ENCODE measurements at regions of chr11 and their contacts with region 1.

Region 1: GRCh38 chr11:32323814-32324130 is 111.6 kb downstream of the WT1 start:
- DNase-seq: no peak
- ATAC-seq: no peak
- H3K4me3 ChIP-seq: no peak overlapping the region
- H3K27ac ChIP-seq: no peak overlapping the region
- H3K4me1 ChIP-seq: no peaks in the 10 kb centered on the region
- H3K27me3 ChIP-seq: 0 out of 4 replicates have a peak, but pooled peaks cover 0 to 2% of the 10 kb centered on the region in 2 experiments
- CTCF ChIP-seq: no peak
- EP300 ChIP-seq: no peak
- POLR2A ChIP-seq: no peak
- RAD21 ChIP-seq: no peak

Region 2: DNA sequence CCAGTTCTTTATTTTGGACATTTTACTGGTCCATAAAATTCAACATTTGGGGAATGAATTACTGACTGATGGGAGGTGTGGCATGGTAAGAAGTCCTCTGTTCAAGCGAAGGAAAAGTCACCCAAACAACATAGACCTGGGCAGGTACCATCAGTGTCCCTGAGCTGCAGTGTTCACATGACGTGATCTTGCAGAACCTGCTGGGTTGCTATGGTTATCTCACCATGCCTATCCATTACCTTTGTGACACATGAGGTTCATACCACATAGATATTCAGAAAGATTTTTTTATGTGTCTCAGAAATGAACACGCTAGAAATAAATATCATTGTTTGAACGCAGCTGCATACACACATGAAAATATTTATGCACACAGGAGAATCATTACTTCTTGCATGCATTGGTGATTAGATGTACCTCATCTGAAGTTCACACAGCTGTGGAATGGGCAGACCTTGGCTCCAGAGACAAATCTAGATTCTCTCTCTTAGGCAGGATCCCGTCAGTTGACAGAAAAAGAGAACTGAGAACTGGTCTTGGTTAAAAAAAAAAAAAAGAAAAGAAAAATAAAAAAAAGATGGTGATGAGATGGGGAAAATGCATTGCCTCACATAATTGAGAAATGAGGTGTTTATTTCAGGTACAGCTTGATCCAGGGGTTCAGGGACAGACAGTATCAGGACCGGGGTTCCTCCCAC is 254.3 kb before region 1 on chr11:
- CTCF ChIA-PET with region 1: no interaction called
- POLR2A ChIA-PET with region 1: no interaction called
- RAD21 ChIA-PET with region 1: no interaction called
- SMC1A ChIA-PET with region 1: no interaction called
- in situ Hi-C with region 1: no loop called
- intact Hi-C with region 1: no loop called
- DNase-seq: no peak
- ATAC-seq: peak; percentile 87
- H3K4me3 ChIP-seq: no peak overlapping the region
- H3K27ac ChIP-seq: no peak overlapping the region
- H3K4me1 ChIP-seq: peaks cover 5% of the 10 kb centered on the region
- H3K27me3 ChIP-seq: no peaks in the 10 kb centered on the region
- CTCF ChIP-seq: no peak
- EP300 ChIP-seq: no peak
- POLR2A ChIP-seq: no peak
- RAD21 ChIP-seq: no peak

Region 3: GRCh38 chr11:32312865-32313403 is 10.8 kb before region 1 on chr11:
- CTCF ChIA-PET with region 1: interaction called, 10 read pairs
- POLR2A ChIA-PET with region 1: no interaction called
- RAD21 ChIA-PET with region 1: interaction called, 3 read pairs
- SMC1A ChIA-PET with region 1: interaction called, 10 read pairs
- in situ Hi-C with region 1: no loop called
- intact Hi-C with region 1: no loop called
- DNase-seq: no peak
- ATAC-seq: peak; percentile 78
- H3K4me3 ChIP-seq: no peak overlapping the region
- H3K27ac ChIP-seq: no peak overlapping the region
- H3K4me1 ChIP-seq: no peaks in the 10 kb centered on the region
- H3K27me3 ChIP-seq: peaks cover 0 to 2% of the 10 kb centered on the region in 2 experiments; a peak in 1 of 4 replicates
- CTCF ChIP-seq: peak; percentile 49 to 50 (median 49); a peak in 5 of 6 replicates
- EP300 ChIP-seq: no peak
- POLR2A ChIP-seq: no peak
- RAD21 ChIP-seq: 0 out of 2 replicates have a peak, but pooled peaks have one; percentile 19

Region 4: DNA sequence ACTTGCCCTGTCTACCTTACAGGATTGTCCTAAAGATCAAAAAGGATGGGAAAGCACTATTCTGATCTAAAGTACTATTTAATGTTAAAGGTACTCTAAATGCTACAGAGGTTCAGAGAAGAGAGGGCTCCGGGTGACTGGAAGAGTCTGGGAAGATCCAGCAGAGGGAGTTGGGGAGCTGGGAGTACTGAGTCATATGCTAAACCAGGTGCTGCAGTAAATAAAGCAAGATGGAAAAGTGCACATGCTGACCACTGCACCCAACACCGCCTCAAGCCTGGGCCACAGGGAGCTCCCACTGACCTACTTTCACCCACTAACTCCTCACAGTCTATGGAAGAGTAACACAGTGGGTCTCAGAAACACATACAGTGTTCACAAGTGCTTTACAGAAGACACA is 62.2 kb after region 1 on chr11:
- CTCF ChIA-PET with region 1: interaction called, 15 read pairs
- POLR2A ChIA-PET with region 1: no interaction called
- RAD21 ChIA-PET with region 1: interaction called, 8 read pairs
- SMC1A ChIA-PET with region 1: interaction called, 7 read pairs
- in situ Hi-C with region 1: no loop called
- intact Hi-C with region 1: loop called (anchors 5 kb)
- DNase-seq: no peak
- ATAC-seq: peak; percentile 43; the same call in 2 of the 3 replicates
- H3K4me3 ChIP-seq: no peak overlapping the region
- H3K27ac ChIP-seq: no peak overlapping the region
- H3K4me1 ChIP-seq: no peaks in the 10 kb centered on the region
- H3K27me3 ChIP-seq: peaks cover 0 to 1% of the 10 kb centered on the region in 2 experiments; a peak in 3 of 4 replicates
- CTCF ChIP-seq: peak in 2 of 3 experiments; percentile 6 to 28; a peak in 2 of 6 replicates
- EP300 ChIP-seq: no peak
- POLR2A ChIP-seq: no peak
- RAD21 ChIP-seq: peak; percentile 21; the same call in 1 of the 2 replicates

Region 5: GRCh38 chr11:32562839-32563599 is 239.2 kb after region 1 on chr11:
- CTCF ChIA-PET with region 1: interaction called, 14 read pairs
- POLR2A ChIA-PET with region 1: no interaction called
- RAD21 ChIA-PET with region 1: interaction called, 4 read pairs
- SMC1A ChIA-PET with region 1: no interaction called
- in situ Hi-C with region 1: no loop called
- intact Hi-C with region 1: no loop called
- DNase-seq: no peak
- ATAC-seq: no peak
- H3K4me3 ChIP-seq: no peak overlapping the region
- H3K27ac ChIP-seq: no peak overlapping the region
- H3K4me1 ChIP-seq: no peaks in the 10 kb centered on the region
- H3K27me3 ChIP-seq: no peaks in the 10 kb centered on the region
- CTCF ChIP-seq: no peak
- EP300 ChIP-seq: no peak
- POLR2A ChIP-seq: no peak
- RAD21 ChIP-seq: no peak

Region 6: DNA sequence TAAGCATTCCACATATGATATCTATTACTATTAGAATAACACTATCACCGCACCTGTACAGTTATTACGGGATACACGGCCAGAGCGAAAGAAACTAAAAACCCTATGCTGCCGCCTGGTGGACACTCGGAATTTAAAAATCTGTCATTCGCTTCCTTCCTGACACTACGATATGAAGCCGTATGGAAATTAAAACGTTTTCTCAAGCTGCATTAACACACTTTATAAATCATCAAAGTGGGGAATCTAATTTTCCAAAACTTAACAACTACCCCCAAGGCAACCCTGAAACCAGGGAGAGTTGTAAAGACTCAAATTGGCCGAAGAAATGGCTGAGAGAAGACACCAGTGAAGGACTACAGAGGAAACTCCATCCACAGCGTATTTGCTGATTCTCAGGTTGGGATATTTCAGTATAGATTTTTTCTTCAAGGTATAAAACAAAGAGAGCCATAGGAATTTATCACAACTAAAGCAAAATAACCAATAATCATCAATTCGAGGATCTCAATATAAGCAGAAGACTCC is 469.2 kb after region 1 on chr11:
- CTCF ChIA-PET with region 1: interaction called, 24 read pairs
- POLR2A ChIA-PET with region 1: no interaction called
- RAD21 ChIA-PET with region 1: interaction called, 3 read pairs
- SMC1A ChIA-PET with region 1: interaction called, 12 read pairs
- in situ Hi-C with region 1: loop called (anchors 5 kb)
- intact Hi-C with region 1: loop called (anchors 1 kb)
- DNase-seq: peak; percentile 26
- ATAC-seq: peak; percentile 92
- H3K4me3 ChIP-seq: no peak overlapping the region
- H3K27ac ChIP-seq: no peak overlapping the region
- H3K4me1 ChIP-seq: no peaks in the 10 kb centered on the region
- H3K27me3 ChIP-seq: no peaks in the 10 kb centered on the region
- CTCF ChIP-seq: peak; percentile 68 to 81 (median 80)
- EP300 ChIP-seq: no peak
- POLR2A ChIP-seq: no peak
- RAD21 ChIP-seq: peak; percentile 83

Measured in GM12878 (cell line).